AG04449 (cell line): ENCODE measurements at regions of chr17 and their contacts with region 1.

Region 1: GRCh38 chr17:17496189-17497064 is at the start of gene RASD1:
- DNase-seq: no peak
- H3K4me3 ChIP-seq: peak within 1 kb of the TSS; percentile 59
- CTCF ChIP-seq: peak; percentile 79

Region 2: DNA sequence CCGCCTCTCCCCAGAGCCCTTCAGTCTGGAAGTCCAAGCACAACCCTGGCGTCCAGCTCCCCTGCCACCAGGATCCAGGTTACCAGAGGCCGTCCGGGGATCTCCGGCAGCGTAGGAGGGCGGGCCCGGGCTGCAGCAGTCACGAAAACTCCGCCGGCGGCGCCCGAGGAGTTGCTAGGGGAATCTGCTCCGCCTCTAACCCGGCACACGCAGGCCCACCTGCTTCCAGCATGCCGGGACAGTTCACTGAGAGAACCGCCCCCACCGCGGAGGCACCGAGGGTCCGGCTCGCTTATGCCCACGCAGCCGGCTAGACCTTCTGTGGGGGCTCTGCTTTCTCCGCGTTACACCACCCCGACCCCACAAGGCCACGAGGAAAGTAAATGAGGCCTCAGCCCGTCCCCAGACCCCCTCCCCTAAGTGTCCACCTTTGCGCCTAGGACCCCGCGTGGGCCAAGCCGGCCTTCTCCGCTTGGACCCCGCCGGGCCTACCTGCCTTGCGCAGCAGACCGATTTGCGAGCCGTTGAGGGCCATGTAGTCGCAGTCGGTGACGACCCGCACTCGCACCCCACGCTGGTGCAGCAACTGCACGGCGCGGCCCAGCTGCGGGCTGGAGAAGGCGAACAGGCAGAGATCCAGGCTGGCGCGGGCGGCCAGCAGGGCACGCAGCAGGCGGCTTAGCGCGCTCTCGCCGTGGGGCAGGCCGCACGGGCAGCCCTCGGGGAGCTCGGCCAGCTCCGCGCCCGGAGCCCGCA is 290.9 kb before region 1 on chr17:
- CTCF ChIA-PET with region 1: no interaction called
- POLR2A ChIA-PET with region 1: no interaction called
- DNase-seq: no peak
- H3K4me3 ChIP-seq: peak overlapping the region; percentile 62
- CTCF ChIP-seq: no peak

Region 3: DNA sequence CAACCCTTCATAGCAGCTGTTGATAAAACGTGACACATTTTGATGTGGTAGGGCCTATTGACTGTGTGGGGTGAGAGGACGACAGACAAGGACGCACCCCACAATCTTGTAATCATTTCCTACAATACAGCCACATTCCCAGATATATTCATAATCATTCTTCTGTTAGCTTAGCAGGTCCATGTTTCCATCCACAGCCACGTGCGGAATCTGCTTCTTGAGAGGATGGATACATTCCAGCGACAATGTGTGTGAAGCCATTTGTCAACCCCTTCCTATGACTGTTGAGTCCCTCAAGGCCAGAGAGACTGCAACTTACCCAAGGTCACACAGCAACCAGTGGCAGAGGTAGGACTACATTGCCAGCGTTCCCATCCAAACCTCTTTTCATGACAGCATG is 206.7 kb before region 1 on chr17:
- CTCF ChIA-PET with region 1: no interaction called
- POLR2A ChIA-PET with region 1: no interaction called
- DNase-seq: no peak
- H3K4me3 ChIP-seq: no peak overlapping the region
- CTCF ChIP-seq: no peak

Region 4: DNA sequence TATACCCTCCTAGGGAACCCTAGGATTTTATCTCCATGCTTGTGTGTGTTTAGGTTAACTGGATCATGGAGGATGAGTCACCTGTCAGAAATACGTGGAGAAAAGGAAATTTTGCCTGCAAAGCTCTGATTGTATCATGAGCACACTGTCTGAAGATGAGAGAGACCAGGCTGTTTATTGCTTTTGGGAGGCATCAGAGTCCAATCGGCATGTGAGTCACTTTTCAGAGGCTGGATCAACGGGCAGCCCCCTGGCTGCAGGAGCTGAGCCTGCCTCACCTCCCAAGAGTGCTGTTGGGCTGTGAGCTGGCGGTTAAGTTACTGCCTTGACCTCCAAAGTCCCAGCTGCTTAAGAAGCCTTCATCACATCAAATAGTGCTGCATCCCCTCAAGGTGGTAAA is 61.1 kb before region 1 on chr17:
- CTCF ChIA-PET with region 1: interaction called, 9 read pairs
- POLR2A ChIA-PET with region 1: interaction called, 11 read pairs
- DNase-seq: peak; percentile 65
- H3K4me3 ChIP-seq: no peak overlapping the region; the same call in 1 of the 2 replicates
- CTCF ChIP-seq: peak; percentile 53

Region 5: GRCh38 chr17:17506811-17507464 is 10.5 kb after region 1 on chr17:
- CTCF ChIA-PET with region 1: interaction called, 56 read pairs
- POLR2A ChIA-PET with region 1: interaction called, 20 read pairs
- DNase-seq: no peak
- H3K4me3 ChIP-seq: no peak overlapping the region
- CTCF ChIP-seq: no peak

Region 6: DNA sequence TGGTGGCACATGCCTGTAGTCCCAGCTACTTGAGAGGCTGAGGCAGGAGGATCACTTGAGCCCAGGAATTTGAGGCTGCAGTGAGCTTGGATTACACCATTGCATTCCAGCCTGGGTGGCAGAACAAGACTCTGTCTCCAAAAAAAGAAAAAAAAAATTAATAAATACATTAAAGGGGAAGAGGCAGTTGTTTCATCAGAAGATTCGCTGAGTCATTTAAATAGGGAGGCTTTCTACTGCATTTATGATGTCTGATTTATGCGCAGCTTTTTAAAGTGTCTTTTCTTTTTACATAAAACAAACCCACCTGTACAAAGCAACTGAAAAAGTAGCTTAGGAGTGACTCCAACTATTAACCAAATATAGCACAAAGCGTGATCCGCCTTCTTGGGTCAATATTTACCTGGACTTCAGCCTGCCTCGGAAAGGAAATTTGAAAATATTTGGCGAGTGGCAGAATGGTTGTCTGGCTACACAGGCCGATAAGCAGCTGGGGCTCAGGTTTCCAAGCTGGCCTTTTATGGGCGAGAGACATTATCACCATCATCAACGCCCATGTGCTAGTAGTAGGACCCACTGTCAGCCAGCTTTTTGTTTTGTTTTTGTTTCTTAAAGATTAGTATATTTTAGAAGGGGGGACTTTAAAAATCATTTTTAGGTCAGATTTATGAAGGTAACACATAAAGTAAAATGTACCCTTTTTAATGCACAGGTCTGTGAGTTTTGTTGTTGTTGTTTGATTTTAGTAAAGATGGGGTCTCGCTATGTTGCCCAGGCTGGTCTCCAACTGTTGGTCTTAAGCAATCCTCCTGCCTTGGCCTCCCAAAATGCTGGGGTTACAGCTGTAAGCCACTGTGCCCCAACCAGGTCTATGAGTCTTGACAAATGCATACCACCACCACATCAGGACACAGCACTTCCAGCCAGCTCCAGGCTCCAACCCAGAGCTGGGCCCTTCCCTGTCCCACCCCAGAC is 42.3 kb after region 1 on chr17:
- CTCF ChIA-PET with region 1: interaction called, 16 read pairs
- POLR2A ChIA-PET with region 1: no interaction called
- DNase-seq: no peak
- H3K4me3 ChIP-seq: no peak overlapping the region
- CTCF ChIP-seq: no peak

Region 7: DNA sequence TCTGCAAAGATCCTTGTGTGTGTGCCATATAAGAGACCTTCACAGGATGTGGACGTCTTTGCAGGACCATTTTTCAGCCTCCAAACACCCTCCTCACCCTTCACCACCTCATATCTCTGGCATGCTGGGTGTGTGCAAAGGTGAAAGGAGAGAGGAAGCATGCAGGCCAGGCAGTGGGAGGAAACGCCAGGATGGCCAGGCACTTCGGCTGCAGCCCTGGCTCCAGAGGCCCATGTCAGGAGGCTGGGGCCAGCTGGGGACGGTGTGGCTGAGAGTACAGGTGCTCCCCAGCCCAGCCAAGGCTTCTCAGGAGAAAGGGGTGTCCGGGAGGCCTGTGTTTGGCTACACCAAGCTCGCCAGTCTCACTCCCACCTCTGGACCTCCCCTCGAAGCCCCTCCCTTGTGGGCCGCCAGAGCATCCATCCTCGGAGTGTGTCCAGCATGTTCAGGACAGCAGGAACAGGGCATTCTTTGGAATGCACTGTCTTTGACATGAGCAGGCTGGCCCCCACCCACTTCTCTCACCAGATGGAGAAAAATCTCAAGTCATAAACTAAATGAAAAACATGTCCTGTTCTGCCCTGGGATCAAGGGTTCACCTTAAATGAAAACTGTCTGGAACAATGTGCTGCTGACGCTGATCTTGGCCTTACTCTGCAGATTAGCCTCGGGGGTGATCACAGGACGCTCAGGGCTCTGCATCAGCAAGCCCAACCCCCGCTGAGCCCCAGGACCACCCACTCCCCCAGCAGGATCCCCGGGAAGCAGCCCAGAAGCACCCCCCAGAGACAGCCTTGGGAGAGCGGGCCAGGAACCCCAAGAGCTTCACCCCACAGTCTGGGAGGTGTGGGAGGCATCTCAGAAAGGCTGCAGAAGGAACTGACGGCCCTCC is 79.2 kb after region 1 on chr17:
- CTCF ChIA-PET with region 1: interaction called, 172 read pairs
- POLR2A ChIA-PET with region 1: no interaction called
- DNase-seq: no peak
- H3K4me3 ChIP-seq: no peak overlapping the region
- CTCF ChIP-seq: no peak

Region 8: DNA sequence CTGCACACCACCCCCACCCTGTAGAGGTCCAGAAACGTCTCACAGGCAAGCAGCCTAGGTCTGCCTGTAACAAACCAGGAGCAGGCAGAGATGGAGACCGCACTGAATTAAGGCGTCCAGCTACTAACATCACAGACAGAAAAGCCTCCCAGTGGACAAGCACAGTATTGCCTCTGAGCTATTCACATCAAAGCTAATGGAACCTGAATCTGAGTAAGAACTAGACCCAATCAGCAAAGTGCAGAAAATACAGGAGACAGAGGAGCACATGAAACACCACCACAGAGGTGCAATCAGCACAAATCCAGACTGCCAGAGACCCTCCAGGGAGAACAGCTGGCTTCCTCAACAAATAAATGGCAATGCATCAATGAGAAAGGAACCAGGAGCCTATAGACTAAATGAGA is 117.3 kb after region 1 on chr17:
- CTCF ChIA-PET with region 1: interaction called, 44 read pairs
- POLR2A ChIA-PET with region 1: interaction called, 6 read pairs
- DNase-seq: no peak
- H3K4me3 ChIP-seq: no peak overlapping the region
- CTCF ChIP-seq: peak; percentile 67

Region 9: GRCh38 chr17:17659340-17659739 is 162.9 kb after region 1 on chr17:
- CTCF ChIA-PET with region 1: no interaction called
- POLR2A ChIA-PET with region 1: no interaction called
- DNase-seq: no peak
- H3K4me3 ChIP-seq: no peak overlapping the region
- CTCF ChIP-seq: no peak